IMR-90 (cell line): ENCODE measurements at regions of chr13 and their contacts with region 1.

Region 1: GRCh38 chr13:44815623-44816022 is 173.6 kb downstream of the NUFIP1 start:
- DNase-seq: peak; percentile 98
- ATAC-seq: peak; percentile 87
- H3K4me3 ChIP-seq: no peak overlapping the region
- H3K27ac ChIP-seq: peak overlapping the region; percentile 63
- H3K4me1 ChIP-seq: peaks cover 27% of the 10 kb centered on the region
- H3K27me3 ChIP-seq: no peaks in the 10 kb centered on the region
- CTCF ChIP-seq: no peak
- POLR2A ChIP-seq: no peak
- RAD21 ChIP-seq: peak; percentile 8; the same call in 1 of the 2 replicates

Region 2: DNA sequence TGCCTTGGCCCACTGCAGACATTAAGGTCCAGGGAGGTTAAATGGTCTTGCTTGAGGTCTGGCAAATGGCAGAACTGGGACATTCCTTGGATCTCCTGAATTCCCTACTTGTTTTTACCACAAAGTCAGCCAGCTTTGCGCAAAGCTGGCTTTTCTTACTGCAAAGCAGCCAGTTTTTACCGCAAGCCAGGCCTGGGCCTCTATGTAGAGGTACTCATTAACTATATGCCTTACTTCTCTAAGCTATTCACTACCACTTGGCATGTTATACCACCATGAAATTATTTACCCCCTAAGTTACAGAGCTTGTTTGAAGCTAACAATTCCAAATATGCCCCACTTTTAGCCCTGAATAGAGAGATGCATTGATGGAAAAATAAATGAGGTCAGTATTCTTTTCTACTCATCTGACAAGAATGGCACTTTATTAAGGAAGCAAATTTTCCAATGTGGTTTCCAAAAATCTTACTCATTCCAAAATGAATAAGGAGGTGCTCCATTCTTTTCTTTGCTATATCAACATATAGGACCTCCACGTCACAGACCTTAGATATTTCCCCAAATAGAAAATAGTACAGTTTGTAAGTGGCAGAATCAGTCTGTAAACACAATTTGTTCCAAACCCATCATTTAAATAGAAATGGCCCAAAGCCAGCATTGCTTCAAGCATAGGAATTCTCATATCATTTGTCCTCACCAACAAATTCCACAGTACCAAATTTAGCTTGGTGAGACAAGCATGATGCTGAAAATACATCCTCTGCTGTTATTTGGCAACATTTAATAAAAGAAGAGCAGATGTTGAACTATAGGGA is 95.6 kb before region 1 on chr13:
- CTCF ChIA-PET with region 1: no interaction called
- POLR2A ChIA-PET with region 1: no interaction called
- dilution Hi-C with region 1: no loop called
- in situ Hi-C with region 1: no loop called
- intact Hi-C with region 1: loop called (anchors 5 kb)
- DNase-seq: peak; percentile 75
- ATAC-seq: peak; percentile 63
- H3K4me3 ChIP-seq: no peak overlapping the region
- H3K27ac ChIP-seq: peak overlapping the region; percentile 50; the same call in 1 of the 2 replicates
- H3K4me1 ChIP-seq: peaks cover 8% of the 10 kb centered on the region
- H3K27me3 ChIP-seq: no peaks in the 10 kb centered on the region
- CTCF ChIP-seq: no peak
- POLR2A ChIP-seq: no peak
- RAD21 ChIP-seq: no peak

Region 3: DNA sequence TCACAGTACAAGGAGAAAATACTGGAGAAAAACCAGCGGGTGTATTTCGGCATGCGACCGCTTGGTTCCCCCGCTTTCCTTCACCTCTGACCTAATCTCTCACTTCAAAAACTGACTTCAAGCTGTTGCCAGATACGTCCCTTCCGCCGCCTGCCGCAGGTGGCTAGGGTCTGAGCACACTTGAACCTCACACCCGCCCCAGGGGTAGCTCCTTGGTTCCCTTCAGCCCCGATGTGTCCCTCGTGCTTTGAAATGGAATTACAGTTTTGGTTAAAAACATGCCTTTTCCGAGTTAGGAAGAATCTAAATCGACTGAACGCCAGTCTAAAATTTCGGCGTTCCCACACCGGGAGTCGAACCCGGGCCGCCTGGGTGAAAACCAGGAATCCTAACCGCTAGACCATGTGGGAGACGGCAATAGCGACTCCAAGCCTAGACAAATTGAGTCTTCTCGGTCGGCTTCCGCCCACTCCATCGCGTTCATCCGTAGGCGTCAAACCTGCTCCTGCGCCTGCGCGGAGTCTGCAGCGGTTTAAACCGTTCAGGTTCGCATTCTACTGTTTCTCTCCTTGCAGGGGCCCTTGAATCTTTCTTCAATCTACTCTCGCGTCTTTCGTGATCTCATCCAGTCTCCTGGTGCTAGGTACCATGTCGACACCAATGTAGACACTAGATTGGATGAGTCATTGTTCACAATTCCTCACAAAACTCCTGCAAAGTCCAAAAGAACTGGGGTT is 102.1 kb after region 1 on chr13:
- CTCF ChIA-PET with region 1: no interaction called
- POLR2A ChIA-PET with region 1: no interaction called
- dilution Hi-C with region 1: no loop called
- in situ Hi-C with region 1: no loop called
- intact Hi-C with region 1: loop called (anchors 5 kb)
- DNase-seq: peak; percentile 97
- ATAC-seq: peak; percentile 79
- H3K4me3 ChIP-seq: peak overlapping the region; percentile 52
- H3K27ac ChIP-seq: peak overlapping the region; percentile 89
- H3K4me1 ChIP-seq: peaks cover 10% of the 10 kb centered on the region
- H3K27me3 ChIP-seq: no peaks in the 10 kb centered on the region
- CTCF ChIP-seq: peak; percentile 48
- POLR2A ChIP-seq: no peak
- RAD21 ChIP-seq: peak; percentile 65